Posterior cingulate gyrus (tissue), 11 donors: ENCODE measurements at regions of chr19 and their contacts with region 1.

Region 1: GRCh38 chr19:58305065-58305931 is at the start of gene ERVK3-1:
- DNase-seq: peak; percentile 94 to 100 (median 96)

Region 2: GRCh38 chr19:58182989-58183816 is 122.1 kb before region 1 on chr19 and contains the start of gene ZNF274:
- intact Hi-C with region 1: loop called (anchors 10 kb)
- DNase-seq: peak; percentile 77 to 98 (median 88)

Region 3: DNA sequence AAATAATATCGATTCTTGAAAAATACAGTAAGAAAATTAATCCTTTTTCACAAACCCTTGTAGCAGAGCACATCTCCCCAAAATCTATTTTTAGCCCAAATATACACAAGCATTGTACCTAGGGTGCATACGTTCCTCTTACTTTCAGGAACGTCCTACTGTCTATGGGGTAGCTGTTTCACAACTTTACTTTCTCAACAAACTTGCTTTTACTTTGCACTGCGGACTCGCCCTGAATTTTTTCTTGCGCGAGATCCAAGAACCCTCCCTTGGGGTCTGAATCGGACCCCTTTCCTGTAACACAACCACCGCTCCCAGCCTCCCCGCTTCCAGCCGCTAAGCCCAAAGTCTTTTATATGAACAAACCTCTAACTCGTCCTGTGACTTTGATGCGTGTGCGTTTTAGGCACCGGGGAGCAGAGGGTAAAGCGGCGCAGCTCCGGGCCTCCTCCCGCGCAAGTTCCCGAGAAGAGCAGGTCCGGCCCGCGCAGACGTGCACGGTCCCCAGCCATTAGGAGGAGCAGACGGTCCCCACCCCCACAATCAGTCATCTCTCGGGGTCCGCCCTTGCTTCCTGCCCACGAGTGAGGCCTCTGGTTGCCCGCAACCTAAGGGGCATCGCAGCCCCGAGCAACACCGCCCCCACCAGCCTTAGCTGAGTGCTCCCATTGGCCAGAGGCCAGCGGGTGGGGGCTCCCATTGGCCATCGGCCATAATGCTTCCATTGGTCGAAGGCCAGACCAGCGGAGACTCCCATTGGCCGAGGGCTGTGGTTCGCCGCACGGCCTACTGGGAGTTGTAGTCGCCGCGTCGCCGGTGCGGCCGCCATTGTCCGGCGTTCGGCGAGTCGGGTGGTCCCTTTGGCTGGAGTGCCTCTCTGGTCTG is 26.9 kb before region 1 on chr19 and contains the start of gene ZNF8:
- intact Hi-C with region 1: loop called (anchors 2 kb)
- DNase-seq: peak; percentile 95 to 99 (median 96)